Prostate gland (tissue), 2 donors: ENCODE measurements at regions of chr6 and their contacts with region 1.

Region 1: GRCh38 chr6:18155150-18155863 is at the start of gene KDM1B:
- DNase-seq: peak; percentile 98
- H3K4me3 ChIP-seq: peak within 1 kb of the TSS; percentile 86 to 90
- H3K27ac ChIP-seq: peak within 1 kb of the TSS; percentile 82 to 84
- H3K4me1 ChIP-seq: no peaks in the 10 kb centered on the region
- H3K27me3 ChIP-seq: no peaks in the 10 kb centered on the region
- CTCF ChIP-seq: peak in 1 of 4 experiments; percentile 26
- POLR2A ChIP-seq: peak; percentile 73
- total RNA-seq, gene KDM1B: 11.0 to 31.8 TPM

Region 2: GRCh38 chr6:18264219-18264922 is 109.1 kb after region 1 on chr6 and contains the start of gene DEK:
- intact Hi-C with region 1: loop called (anchors 5 kb)
- DNase-seq: peak; percentile 85
- H3K4me3 ChIP-seq: peak within 1 kb of the TSS; percentile 81 to 85
- H3K27ac ChIP-seq: peak within 1 kb of the TSS; percentile 98 to 99
- H3K4me1 ChIP-seq: no peaks in the 10 kb centered on the region
- H3K27me3 ChIP-seq: no peaks in the 10 kb centered on the region
- CTCF ChIP-seq: peak in 3 of 4 experiments; percentile 39 to 71 (median 67)
- POLR2A ChIP-seq: peak; percentile 47
- total RNA-seq, gene DEK: 74.1 to 133 TPM